Activated CD4-positive, alpha-beta T cell treated with anti-CD3 and anti-CD28 coated beads for 36 hours (primary cell): ENCODE measurements at regions of chr16 and their contacts with region 1.

Region 1: DNA sequence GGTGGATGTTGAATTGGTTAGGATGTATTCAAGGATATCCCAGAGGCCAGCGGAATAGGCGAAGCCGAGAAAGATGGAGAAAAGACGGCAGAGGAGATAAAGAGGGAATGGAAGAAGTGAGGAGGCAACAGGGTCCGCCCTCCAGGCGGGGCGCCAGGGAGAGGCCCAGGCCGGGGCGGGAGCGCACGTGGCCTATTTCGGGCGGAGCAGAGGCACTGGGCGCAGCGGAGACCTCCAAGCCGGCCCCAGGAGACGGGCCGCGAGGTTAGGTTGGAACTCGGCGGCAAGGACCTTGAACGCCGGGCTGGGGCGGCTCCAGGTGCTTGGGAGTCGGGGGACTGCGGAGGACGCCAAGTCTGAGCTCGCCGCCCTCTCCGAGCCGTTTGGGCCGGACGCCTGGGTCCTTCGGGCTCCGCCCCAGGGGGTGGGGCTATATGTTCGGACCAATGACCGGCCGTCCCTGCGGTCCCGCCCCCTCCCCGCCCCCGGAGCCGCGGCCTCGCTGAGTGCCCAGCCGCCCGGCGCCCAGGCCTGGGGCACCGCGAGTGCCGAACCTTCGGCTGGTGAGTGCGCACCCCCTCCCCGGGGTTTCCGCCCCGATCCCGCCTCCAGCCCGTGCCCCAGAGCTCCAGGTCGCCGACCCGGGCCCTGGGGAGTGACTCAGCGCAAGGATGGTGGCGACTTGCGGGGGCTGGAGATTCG is at the start of gene ZNF771:
- DNase-seq: peak; percentile 95
- ATAC-seq: peak; percentile 85
- H3K4me3 Mint-ChIP-seq: peak within 1 kb of the TSS; percentile 79
- H3K27ac Mint-ChIP-seq: peak within 1 kb of the TSS; percentile 97
- H3K4me1 Mint-ChIP-seq: peaks cover 26% of the 10 kb centered on the region
- H3K27me3 Mint-ChIP-seq: peaks cover 2% of the 10 kb centered on the region
- total RNA-seq, gene ZNF771: 3.8 to 4.0 TPM

Region 2: GRCh38 chr16:30112197-30113030 is 294.8 kb before region 1 on chr16:
- CTCF ChIA-PET with region 1: interaction called, 3 read pairs
- POLR2A ChIA-PET with region 1: no interaction called
- intact Hi-C with region 1: loop called in 1 of 2 experiments (anchors 10 kb)
- DNase-seq: peak; percentile 85
- ATAC-seq: peak; percentile 80
- H3K4me3 Mint-ChIP-seq: no peak overlapping the region
- H3K27ac Mint-ChIP-seq: no peak overlapping the region
- H3K4me1 Mint-ChIP-seq: peaks cover 6% of the 10 kb centered on the region
- H3K27me3 Mint-ChIP-seq: no peaks in the 10 kb centered on the region

Region 3: DNA sequence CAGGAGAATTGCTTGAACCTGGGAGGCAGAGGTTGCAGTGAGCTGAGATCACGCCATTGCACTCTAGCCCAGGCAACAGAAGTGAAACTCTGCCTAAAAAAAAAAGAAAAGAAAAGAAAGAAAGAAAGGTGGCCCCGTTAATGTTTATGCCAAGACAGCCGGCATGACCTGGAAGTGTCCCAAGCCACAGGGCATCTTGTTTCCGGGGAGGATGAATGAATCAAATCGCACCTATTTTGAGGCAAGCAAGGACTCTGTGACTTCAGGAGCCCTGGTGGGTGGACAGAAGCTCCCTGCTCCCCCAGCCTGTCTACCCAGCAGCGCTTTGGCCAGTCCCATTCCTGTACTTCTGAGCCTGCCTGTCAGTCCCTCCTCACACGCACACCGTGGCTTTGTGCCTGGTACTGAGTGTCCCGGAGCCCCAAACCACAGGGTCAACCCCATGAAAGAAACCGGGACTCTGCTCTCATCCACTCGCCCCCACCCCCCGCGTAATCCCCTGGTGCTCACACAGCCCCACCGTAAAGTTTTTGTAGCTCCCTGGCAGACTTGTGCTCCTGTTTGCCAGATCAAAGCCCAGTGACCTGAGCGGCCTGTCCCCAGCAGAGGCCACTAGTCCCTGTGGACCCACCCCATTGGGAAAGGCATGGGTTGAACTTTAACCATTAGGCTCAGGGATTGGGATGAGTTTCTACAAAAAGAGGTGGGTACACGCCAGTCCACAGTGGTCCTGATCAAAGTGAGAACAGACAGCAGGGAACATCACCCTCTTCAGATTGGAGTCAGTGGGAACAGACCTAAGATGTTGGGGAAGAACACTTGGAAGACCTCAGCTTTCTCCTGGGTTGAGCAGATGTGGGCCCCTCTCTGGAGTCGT is 71.4 kb before region 1 on chr16:
- CTCF ChIA-PET with region 1: interaction called, 3 read pairs
- POLR2A ChIA-PET with region 1: no interaction called
- intact Hi-C with region 1: loop called in 1 of 2 experiments (anchors 1 kb)
- DNase-seq: peak; percentile 55
- ATAC-seq: peak; percentile 13
- H3K4me3 Mint-ChIP-seq: peak overlapping the region; percentile 87
- H3K27ac Mint-ChIP-seq: peak overlapping the region; percentile 73
- H3K4me1 Mint-ChIP-seq: peaks cover 22% of the 10 kb centered on the region
- H3K27me3 Mint-ChIP-seq: no peaks in the 10 kb centered on the region

Region 4: DNA sequence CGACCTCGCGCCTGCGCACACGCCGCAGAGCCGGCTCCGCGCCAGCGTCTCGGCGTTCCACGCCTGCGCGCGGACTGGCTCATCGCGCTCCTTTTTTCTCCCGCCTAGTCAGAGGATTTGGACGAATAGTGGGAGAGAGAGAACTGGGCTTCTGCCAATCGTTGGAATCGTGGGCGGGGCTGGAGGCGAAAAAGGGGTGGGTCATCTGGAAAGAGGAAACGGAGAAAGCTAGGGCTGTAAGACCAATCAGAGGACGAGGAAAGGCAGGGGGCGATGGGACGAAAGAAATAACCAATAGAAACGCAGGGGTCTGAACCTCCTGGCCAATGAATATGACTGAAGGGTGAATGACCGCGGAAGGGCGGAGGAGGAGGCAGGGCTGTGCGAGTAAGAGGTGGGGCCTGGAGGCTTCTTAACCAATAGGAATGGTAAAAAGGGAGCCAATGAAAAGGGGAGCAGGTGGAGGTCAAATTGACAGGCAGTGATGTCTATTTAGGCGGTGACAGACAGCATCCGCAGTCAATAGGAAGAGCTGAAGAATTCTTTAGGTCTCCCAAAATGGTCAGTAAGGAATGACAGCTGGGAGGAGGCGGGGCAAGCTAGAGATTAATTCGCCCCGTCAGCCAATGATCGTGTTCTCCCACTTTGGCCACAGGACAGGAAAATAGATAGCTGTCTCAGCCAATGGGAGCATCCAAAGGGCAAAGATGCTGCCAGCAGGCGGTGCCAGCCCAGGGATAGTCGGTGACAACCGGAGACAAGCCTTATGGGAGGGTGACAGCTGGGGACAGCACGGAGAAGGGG is 36.6 kb before region 1 on chr16 and contains the start of gene TBC1D10B:
- CTCF ChIA-PET with region 1: interaction called, 16 read pairs
- POLR2A ChIA-PET with region 1: interaction called, 3 read pairs
- intact Hi-C with region 1: loop called (anchors 1 to 5 kb)
- DNase-seq: peak; percentile 99
- ATAC-seq: peak; percentile 88
- H3K4me3 Mint-ChIP-seq: peak within 1 kb of the TSS; percentile 89
- H3K27ac Mint-ChIP-seq: peak within 1 kb of the TSS; percentile 97
- H3K4me1 Mint-ChIP-seq: peaks cover 40% of the 10 kb centered on the region
- H3K27me3 Mint-ChIP-seq: no peaks in the 10 kb centered on the region
- total RNA-seq, gene TBC1D10B: 38.1 to 43.4 TPM

Region 5: GRCh38 chr16:30395155-30395991 is 11.9 kb before region 1 on chr16 and contains the start of gene ZNF48:
- CTCF ChIA-PET with region 1: interaction called, 18 read pairs
- POLR2A ChIA-PET with region 1: interaction called, 8 read pairs
- intact Hi-C with region 1: loop called in 1 of 2 experiments (anchors 1 kb)
- DNase-seq: peak; percentile 67
- ATAC-seq: peak; percentile 61
- H3K4me3 Mint-ChIP-seq: peak within 1 kb of the TSS; percentile 81
- H3K27ac Mint-ChIP-seq: peak within 1 kb of the TSS; percentile 48
- H3K4me1 Mint-ChIP-seq: peaks cover 28% of the 10 kb centered on the region
- H3K27me3 Mint-ChIP-seq: no peaks in the 10 kb centered on the region
- total RNA-seq, gene ZNF48: 10.6 to 11.0 TPM

Region 6: GRCh38 chr16:30552956-30553355 is 145.7 kb after region 1 on chr16:
- CTCF ChIA-PET with region 1: no interaction called
- POLR2A ChIA-PET with region 1: no interaction called
- intact Hi-C with region 1: no loop called
- DNase-seq: no peak
- ATAC-seq: no peak
- H3K4me3 Mint-ChIP-seq: no peak overlapping the region
- H3K27ac Mint-ChIP-seq: peak overlapping the region; percentile 91
- H3K4me1 Mint-ChIP-seq: peaks cover 61% of the 10 kb centered on the region
- H3K27me3 Mint-ChIP-seq: no peaks in the 10 kb centered on the region

Region 7: GRCh38 chr16:30615358-30616091 is 208.3 kb after region 1 on chr16:
- CTCF ChIA-PET with region 1: interaction called, 13 read pairs
- POLR2A ChIA-PET with region 1: interaction called, 3 read pairs
- intact Hi-C with region 1: no loop called
- DNase-seq: peak; percentile 94
- ATAC-seq: peak; percentile 89
- H3K4me3 Mint-ChIP-seq: no peak overlapping the region
- H3K27ac Mint-ChIP-seq: no peak overlapping the region
- H3K4me1 Mint-ChIP-seq: peaks cover 4% of the 10 kb centered on the region
- H3K27me3 Mint-ChIP-seq: no peaks in the 10 kb centered on the region